ENCODE measurements at regions of chr11 and their contacts with region 1.

Region 1: GRCh38 chr11:123478352-123478987 is 48.4 kb downstream of the GRAMD1B start:
- DNase-seq: no peak
- H3K4me3 ChIP-seq: no peak overlapping the region
- H3K27ac ChIP-seq: no peak overlapping the region
- H3K4me1 ChIP-seq: peaks cover 0 to 5% of the 10 kb centered on the region in 2 donors
- H3K27me3 ChIP-seq: no peaks in the 10 kb centered on the region
- CTCF ChIP-seq: peak; percentile 64 to 72 (median 66)

Region 2: GRCh38 chr11:123103326-123103980 is 375.0 kb before region 1 on chr11:
- intact Hi-C with region 1: loop called (anchors 10 kb)
- DNase-seq: peak in 1 of 2 donors; percentile 89
- H3K4me3 ChIP-seq: no peak overlapping the region
- H3K27ac ChIP-seq: peak overlapping the region; percentile 58 to 65
- H3K4me1 ChIP-seq: peaks cover 3 to 18% of the 10 kb centered on the region in 2 donors
- H3K27me3 ChIP-seq: no peaks in the 10 kb centered on the region
- CTCF ChIP-seq: peak; percentile 57 to 83 (median 61)

Region 3: GRCh38 chr11:123301696-123302400 is 176.6 kb before region 1 on chr11:
- intact Hi-C with region 1: loop called (anchors 1 kb)
- DNase-seq: peak in 1 of 2 donors; percentile 71
- H3K4me3 ChIP-seq: peak overlapping the region; percentile 57 to 67
- H3K27ac ChIP-seq: no peak overlapping the region
- H3K4me1 ChIP-seq: peaks cover 0 to 5% of the 10 kb centered on the region in 2 donors
- H3K27me3 ChIP-seq: no peaks in the 10 kb centered on the region
- CTCF ChIP-seq: peak; percentile 66 to 80 (median 75)

Region 4: GRCh38 chr11:123407130-123407995 is 71.1 kb before region 1 on chr11:
- intact Hi-C with region 1: loop called (anchors 5 kb)
- DNase-seq: no peak
- H3K4me3 ChIP-seq: no peak overlapping the region
- H3K27ac ChIP-seq: no peak overlapping the region
- H3K4me1 ChIP-seq: no peaks in the 10 kb centered on the region
- H3K27me3 ChIP-seq: peaks cover 5% of the 10 kb centered on the region
- CTCF ChIP-seq: peak in 2 of 3 experiments; percentile 30 to 42

Region 5: DNA sequence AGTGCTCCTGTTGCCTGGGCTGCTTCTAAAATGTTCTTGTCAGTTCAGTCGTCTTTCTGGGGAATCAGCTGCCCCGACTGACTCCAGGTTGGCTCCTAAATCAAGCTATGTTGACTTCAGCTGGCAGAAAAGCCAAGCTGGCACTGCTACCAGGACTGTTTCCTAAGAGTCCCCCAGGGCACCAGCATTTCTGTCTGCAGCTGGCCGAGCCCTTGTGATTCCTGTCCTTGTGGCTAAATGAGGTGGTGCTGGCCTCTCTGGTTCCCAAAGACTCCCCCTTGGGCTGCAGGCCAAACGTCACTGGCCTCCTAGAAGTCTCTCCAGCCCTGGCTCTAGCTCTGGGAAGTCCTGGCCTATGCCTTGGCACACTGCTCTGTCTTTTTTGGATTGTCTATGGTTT is 17.3 kb before region 1 on chr11:
- intact Hi-C with region 1: no loop called
- DNase-seq: peak in 1 of 2 donors; percentile 14
- H3K4me3 ChIP-seq: no peak overlapping the region
- H3K27ac ChIP-seq: no peak overlapping the region
- H3K4me1 ChIP-seq: no peaks in the 10 kb centered on the region
- H3K27me3 ChIP-seq: no peaks in the 10 kb centered on the region
- CTCF ChIP-seq: no peak